ENCODE measurements at regions of chr2 and their contacts with region 1.

Region 1: DNA sequence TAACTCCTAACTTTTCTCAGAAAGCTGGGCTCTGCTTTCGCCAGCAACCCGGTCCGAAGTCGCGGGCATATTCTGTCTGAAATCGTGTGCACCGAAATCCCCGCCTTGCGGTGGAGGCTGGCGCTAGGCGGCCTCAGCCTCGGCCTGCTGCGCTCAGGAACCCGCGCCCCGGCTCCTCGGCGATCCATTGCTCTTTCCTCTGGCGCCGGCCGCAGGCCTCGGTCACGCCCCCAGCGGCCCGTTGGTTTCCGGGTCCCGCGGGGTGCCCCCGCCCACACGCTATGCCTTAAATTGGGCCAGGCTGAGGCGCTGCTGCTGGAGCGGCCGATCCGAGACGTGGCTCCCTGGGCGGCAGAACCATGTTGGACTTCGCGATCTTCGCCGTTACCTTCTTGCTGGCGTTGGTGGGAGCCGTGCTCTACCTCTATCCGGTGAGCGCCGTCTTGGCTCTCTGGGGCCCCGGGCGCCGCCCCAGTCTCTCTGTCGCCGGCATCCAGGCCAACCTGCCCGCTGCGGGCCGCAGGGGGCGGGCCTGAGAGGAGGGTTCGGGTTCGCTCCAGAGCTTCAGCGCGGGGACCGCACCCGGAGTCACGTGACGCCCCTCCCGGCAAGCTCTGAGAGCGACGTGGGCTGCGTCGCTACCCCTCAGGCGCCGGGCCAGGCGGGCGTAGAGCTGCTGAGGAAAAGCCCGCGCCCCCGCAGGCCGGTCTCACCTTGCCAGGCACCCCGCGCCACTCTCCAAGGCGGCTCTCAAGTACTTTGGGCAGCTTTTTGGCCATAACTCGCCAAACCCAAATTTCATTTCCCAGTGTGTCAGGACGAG is at the start of gene CYP20A1:
- DNase-seq: peak; percentile 84 to 95
- ATAC-seq: peak; percentile 95 to 97
- H3K4me3 ChIP-seq: peak within 1 kb of the TSS; percentile 91
- H3K27ac ChIP-seq: peak within 1 kb of the TSS; percentile 86 to 98
- H3K4me1 ChIP-seq: peaks cover 14% of the 10 kb centered on the region; the same call in 2 of the 3 replicates
- CTCF ChIP-seq: peak; percentile 33; the same call in 1 of the 3 replicates
- EP300 ChIP-seq: no peak
- POLR2A ChIP-seq: peak; percentile 92
- RAD21 ChIP-seq: peak in 1 of 2 experiments; percentile 25; a peak in 2 of 5 replicates
- polyA plus RNA-seq, gene CYP20A1: 16.0 and 19.7 TPM in 2 replicates

Region 2: DNA sequence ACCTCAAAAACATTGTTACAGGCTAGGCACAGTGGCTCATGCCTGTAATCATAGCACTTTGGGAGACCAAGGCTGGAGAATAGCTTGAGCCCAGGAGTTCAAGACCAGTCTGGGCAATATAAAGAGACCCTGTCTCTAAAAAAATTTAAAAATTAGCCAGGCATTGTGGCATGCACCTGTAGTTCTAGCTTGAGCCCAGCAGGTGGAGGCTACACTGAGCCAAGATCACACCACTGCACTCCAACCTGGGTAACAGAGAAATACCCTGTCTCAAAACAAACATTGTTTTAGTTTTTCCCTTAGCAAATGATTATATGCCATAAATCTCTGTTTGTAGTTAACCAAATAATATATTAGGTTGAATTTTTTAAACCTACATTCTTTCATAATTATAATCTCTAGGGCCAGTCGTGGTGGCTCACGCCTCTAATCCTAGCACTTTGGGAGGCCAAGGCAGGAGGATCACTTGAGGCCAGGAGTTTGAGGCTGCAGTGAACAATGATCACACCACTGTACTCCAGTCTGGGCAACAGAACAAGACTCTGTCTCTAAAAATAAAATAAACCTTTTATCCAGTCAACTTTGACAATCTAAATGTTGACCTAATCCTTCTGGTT is 13.4 kb before region 1 on chr2:
- CTCF ChIA-PET with region 1: interaction called, 10 read pairs
- POLR2A ChIA-PET with region 1: interaction called, 11 read pairs
- DNase-seq: peak in 1 of 2 experiments; percentile 36
- ATAC-seq: peak in 1 of 2 experiments; percentile 90; a peak in 4 of 6 replicates
- H3K4me3 ChIP-seq: no peak overlapping the region
- H3K27ac ChIP-seq: no peak overlapping the region
- H3K4me1 ChIP-seq: no peaks in the 10 kb centered on the region
- CTCF ChIP-seq: peak; percentile 62
- EP300 ChIP-seq: no peak
- POLR2A ChIP-seq: no peak
- RAD21 ChIP-seq: peak; percentile 56 to 61; a peak in 4 of 5 replicates